CD4-positive, alpha-beta T cell (primary cell): ENCODE measurements at regions of chr19 and their contacts with region 1.

Region 1: DNA sequence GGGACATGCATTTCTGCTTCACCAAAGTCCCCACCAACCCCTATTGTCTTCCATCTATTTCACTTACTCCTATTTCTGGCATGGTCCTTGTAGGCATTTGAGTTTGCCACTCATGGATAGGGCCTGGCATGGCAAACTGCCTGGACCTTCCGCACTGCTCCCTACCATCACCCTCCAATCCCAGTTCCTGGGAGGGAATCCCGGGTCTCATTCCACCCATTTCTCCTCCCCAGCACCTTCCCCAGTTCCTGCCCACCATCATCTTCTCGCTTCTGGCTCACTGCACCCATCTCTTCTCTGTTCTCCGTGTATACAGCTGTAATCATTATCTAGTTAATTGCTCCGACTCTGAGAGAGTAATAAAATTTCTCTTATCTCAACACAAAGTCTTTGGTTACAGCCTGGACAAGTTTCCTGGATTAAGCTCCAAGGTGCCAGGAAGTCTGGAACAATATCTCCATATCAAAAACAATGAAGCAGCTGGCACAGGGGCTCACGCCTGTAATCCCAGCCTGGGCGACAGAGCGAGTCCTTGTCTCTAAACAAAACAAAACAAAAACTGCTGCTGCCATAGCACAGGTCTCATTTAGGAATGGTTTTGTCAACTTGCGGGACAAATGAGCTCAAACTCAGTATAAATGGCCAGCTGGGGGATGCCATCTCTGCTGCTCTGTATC is 17.0 kb upstream of the COX7A1 start:
- DNase-seq: no peak
- ATAC-seq: no peak
- H3K4me3 ChIP-seq: no peak overlapping the region
- H3K4me3 Mint-ChIP-seq: no peak overlapping the region
- H3K27ac ChIP-seq: no peak overlapping the region
- H3K27ac Mint-ChIP-seq: no peak overlapping the region
- H3K4me1 ChIP-seq: peaks cover 4% of the 10 kb centered on the region
- H3K4me1 Mint-ChIP-seq: peaks cover 4% of the 10 kb centered on the region
- H3K27me3 ChIP-seq: no peaks in the 10 kb centered on the region
- H3K27me3 Mint-ChIP-seq: no peaks in the 10 kb centered on the region
- CTCF ChIP-seq: no peak

Region 2: DNA sequence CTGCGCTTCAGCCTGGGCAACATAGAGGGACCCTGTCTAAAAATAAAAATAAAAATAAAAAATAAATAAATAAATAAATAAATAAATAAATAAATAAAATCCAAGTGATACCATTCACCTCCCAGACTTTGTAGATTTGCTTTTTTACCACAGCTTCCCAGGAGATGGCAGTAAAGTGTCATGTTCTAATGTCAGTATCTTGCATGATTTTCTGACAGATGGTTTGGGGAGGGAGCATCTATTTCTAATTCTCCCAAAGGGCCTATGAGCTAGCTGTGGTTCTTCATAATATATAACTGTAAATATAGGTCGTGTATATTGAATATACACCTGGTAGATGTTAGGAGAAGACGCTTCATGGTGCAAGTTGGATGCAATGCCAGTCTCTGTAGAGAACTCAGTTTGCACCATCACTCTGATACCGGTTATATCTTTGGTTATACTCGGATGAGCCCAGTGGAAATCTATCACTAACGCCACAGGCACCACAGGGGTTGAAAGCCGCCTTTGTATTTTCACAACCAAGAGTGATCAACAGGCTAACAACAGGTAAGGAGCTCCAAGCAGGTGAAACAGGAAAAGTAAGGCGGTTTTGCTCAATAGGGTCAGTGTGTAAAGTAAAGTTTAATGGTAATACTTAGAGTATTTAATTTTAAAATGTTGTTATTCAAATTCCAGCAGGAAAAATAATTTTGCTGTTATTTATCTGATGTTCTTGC is 286.9 kb before region 1 on chr19:
- CTCF ChIA-PET with region 1: no interaction called
- POLR2A ChIA-PET with region 1: no interaction called
- intact Hi-C with region 1: loop called in 1 of 2 experiments (anchors 1 kb)
- DNase-seq: peak in 6 of 14 experiments; percentile 27 to 87 (median 72)
- ATAC-seq: peak; percentile 87
- H3K4me3 ChIP-seq: no peak overlapping the region
- H3K4me3 Mint-ChIP-seq: no peak overlapping the region
- H3K27ac ChIP-seq: no peak overlapping the region
- H3K27ac Mint-ChIP-seq: no peak overlapping the region
- H3K4me1 ChIP-seq: peaks cover 12% of the 10 kb centered on the region
- H3K4me1 Mint-ChIP-seq: peaks cover 14% of the 10 kb centered on the region
- H3K27me3 ChIP-seq: peaks cover 15 to 18% of the 10 kb centered on the region in 2 experiments
- H3K27me3 Mint-ChIP-seq: peaks cover 32% of the 10 kb centered on the region
- CTCF ChIP-seq: peak; percentile 77

Region 3: DNA sequence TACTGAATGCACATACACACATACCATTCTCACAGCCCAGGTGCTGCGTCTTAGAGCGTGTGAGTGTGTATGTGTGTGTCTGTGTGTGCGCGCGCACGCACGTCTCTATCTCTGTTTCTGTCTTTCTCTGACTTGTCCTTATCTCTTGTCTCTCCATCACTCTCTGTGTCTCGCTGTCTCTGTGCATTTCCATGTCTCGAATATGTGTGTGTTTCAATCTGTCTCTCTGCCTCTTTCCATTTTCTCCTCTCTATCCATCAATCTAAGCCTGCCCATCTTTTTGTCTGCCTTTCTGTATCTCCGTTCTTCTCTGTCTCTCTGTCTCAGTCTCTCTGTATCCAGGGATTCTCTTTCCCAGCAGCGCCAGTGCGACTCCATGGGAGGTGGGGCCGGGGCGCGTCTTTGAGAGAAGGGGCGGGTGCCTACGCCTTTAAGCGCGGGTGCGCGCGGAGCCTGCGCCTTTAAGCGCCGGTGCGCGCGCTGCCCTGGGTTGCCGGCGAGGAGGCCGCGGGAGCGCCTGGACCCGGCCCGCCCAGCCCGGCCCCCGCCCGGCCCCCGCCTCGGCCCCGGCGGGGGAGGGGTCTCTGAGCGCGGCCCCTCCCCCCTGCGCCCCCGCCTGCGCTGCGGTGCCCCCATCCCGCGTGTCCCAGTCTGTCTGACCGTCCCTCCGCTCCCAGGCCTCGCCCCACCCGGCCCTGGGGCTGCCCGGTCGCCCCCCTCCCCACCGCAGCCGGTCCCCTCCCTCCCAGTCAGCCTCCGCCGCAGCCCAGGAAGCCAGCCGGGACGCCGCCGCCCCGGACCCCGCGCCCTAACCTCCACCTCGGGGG is 233.1 kb before region 1 on chr19 and contains the start of gene LRFN3:
- CTCF ChIA-PET with region 1: no interaction called
- POLR2A ChIA-PET with region 1: no interaction called
- intact Hi-C with region 1: no loop called
- DNase-seq: peak in 12 of 14 experiments; percentile 19 to 76 (median 53)
- ATAC-seq: no peak
- H3K4me3 ChIP-seq: peak within 1 kb of the TSS; percentile 74
- H3K4me3 Mint-ChIP-seq: peak within 1 kb of the TSS; percentile 93
- H3K27ac ChIP-seq: peak within 1 kb of the TSS; percentile 22 to 41
- H3K27ac Mint-ChIP-seq: peak within 1 kb of the TSS; percentile 31
- H3K4me1 ChIP-seq: peaks cover 47% of the 10 kb centered on the region
- H3K4me1 Mint-ChIP-seq: peaks cover 47% of the 10 kb centered on the region
- H3K27me3 ChIP-seq: no peaks in the 10 kb centered on the region
- H3K27me3 Mint-ChIP-seq: no peaks in the 10 kb centered on the region
- CTCF ChIP-seq: no peak
- total RNA-seq, gene LRFN3: 4.2 to 4.5 TPM

Region 4: GRCh38 chr19:35963514-35963913 is 205.7 kb before region 1 on chr19:
- CTCF ChIA-PET with region 1: no interaction called
- POLR2A ChIA-PET with region 1: no interaction called
- intact Hi-C with region 1: loop called in 1 of 2 experiments (anchors 5 kb)
- DNase-seq: peak in 9 of 14 experiments; percentile 21 to 67 (median 33)
- ATAC-seq: no peak
- H3K4me3 ChIP-seq: no peak overlapping the region
- H3K4me3 Mint-ChIP-seq: no peak overlapping the region
- H3K27ac ChIP-seq: no peak overlapping the region
- H3K27ac Mint-ChIP-seq: no peak overlapping the region
- H3K4me1 ChIP-seq: peaks cover 27% of the 10 kb centered on the region
- H3K4me1 Mint-ChIP-seq: peaks cover 12% of the 10 kb centered on the region
- H3K27me3 ChIP-seq: no peaks in the 10 kb centered on the region
- H3K27me3 Mint-ChIP-seq: peaks cover 9% of the 10 kb centered on the region
- CTCF ChIP-seq: no peak

Region 5: GRCh38 chr19:36060430-36060829 is 108.8 kb before region 1 on chr19:
- CTCF ChIA-PET with region 1: no interaction called
- POLR2A ChIA-PET with region 1: no interaction called
- intact Hi-C with region 1: loop called in 1 of 2 experiments (anchors 2 kb)
- DNase-seq: peak in 5 of 14 experiments; percentile 10 to 48 (median 23)
- ATAC-seq: no peak
- H3K4me3 ChIP-seq: no peak overlapping the region
- H3K4me3 Mint-ChIP-seq: no peak overlapping the region
- H3K27ac ChIP-seq: no peak overlapping the region
- H3K27ac Mint-ChIP-seq: no peak overlapping the region
- H3K4me1 ChIP-seq: peaks cover 4% of the 10 kb centered on the region
- H3K4me1 Mint-ChIP-seq: peaks cover 7% of the 10 kb centered on the region
- H3K27me3 ChIP-seq: no peaks in the 10 kb centered on the region
- H3K27me3 Mint-ChIP-seq: no peaks in the 10 kb centered on the region
- CTCF ChIP-seq: no peak

Region 6: GRCh38 chr19:36106441-36106840 is 62.8 kb before region 1 on chr19:
- CTCF ChIA-PET with region 1: no interaction called
- POLR2A ChIA-PET with region 1: no interaction called
- intact Hi-C with region 1: no loop called
- DNase-seq: no peak
- ATAC-seq: no peak
- H3K4me3 ChIP-seq: no peak overlapping the region
- H3K4me3 Mint-ChIP-seq: no peak overlapping the region
- H3K27ac ChIP-seq: no peak overlapping the region
- H3K27ac Mint-ChIP-seq: no peak overlapping the region
- H3K4me1 ChIP-seq: no peaks in the 10 kb centered on the region
- H3K4me1 Mint-ChIP-seq: no peaks in the 10 kb centered on the region
- H3K27me3 ChIP-seq: no peaks in the 10 kb centered on the region
- H3K27me3 Mint-ChIP-seq: no peaks in the 10 kb centered on the region
- CTCF ChIP-seq: no peak

Region 7: GRCh38 chr19:36132489-36132891 is 36.7 kb before region 1 on chr19:
- CTCF ChIA-PET with region 1: interaction called, 19 read pairs
- POLR2A ChIA-PET with region 1: interaction called, 12 read pairs
- intact Hi-C with region 1: loop called (anchors 1 kb)
- DNase-seq: peak in 7 of 14 experiments; percentile 19 to 62 (median 47)
- ATAC-seq: no peak
- H3K4me3 ChIP-seq: no peak overlapping the region
- H3K4me3 Mint-ChIP-seq: no peak overlapping the region
- H3K27ac ChIP-seq: no peak overlapping the region
- H3K27ac Mint-ChIP-seq: no peak overlapping the region
- H3K4me1 ChIP-seq: peaks cover 39% of the 10 kb centered on the region
- H3K4me1 Mint-ChIP-seq: peaks cover 21% of the 10 kb centered on the region
- H3K27me3 ChIP-seq: no peaks in the 10 kb centered on the region
- H3K27me3 Mint-ChIP-seq: no peaks in the 10 kb centered on the region
- CTCF ChIP-seq: no peak

Region 8: GRCh38 chr19:36257520-36257876 is 88.3 kb after region 1 on chr19:
- CTCF ChIA-PET with region 1: no interaction called
- POLR2A ChIA-PET with region 1: no interaction called
- intact Hi-C with region 1: no loop called
- DNase-seq: no peak
- ATAC-seq: no peak
- H3K4me3 ChIP-seq: no peak overlapping the region
- H3K4me3 Mint-ChIP-seq: no peak overlapping the region
- H3K27ac ChIP-seq: no peak overlapping the region
- H3K27ac Mint-ChIP-seq: no peak overlapping the region
- H3K4me1 ChIP-seq: no peaks in the 10 kb centered on the region
- H3K4me1 Mint-ChIP-seq: no peaks in the 10 kb centered on the region
- H3K27me3 ChIP-seq: no peaks in the 10 kb centered on the region
- H3K27me3 Mint-ChIP-seq: no peaks in the 10 kb centered on the region
- CTCF ChIP-seq: no peak

Region 9: GRCh38 chr19:36449059-36449670 is 279.9 kb after region 1 on chr19:
- CTCF ChIA-PET with region 1: no interaction called
- POLR2A ChIA-PET with region 1: no interaction called
- intact Hi-C with region 1: no loop called
- DNase-seq: no peak
- ATAC-seq: no peak
- H3K4me3 ChIP-seq: no peak overlapping the region
- H3K4me3 Mint-ChIP-seq: no peak overlapping the region
- H3K27ac ChIP-seq: no peak overlapping the region
- H3K27ac Mint-ChIP-seq: no peak overlapping the region
- H3K4me1 ChIP-seq: no peaks in the 10 kb centered on the region
- H3K4me1 Mint-ChIP-seq: no peaks in the 10 kb centered on the region
- H3K27me3 ChIP-seq: no peaks in the 10 kb centered on the region
- H3K27me3 Mint-ChIP-seq: no peaks in the 10 kb centered on the region
- CTCF ChIP-seq: no peak